GM10248 (cell line): ENCODE measurements at regions of chr5 and their contacts with region 1.

Region 1: GRCh38 chr5:317086-317811 is 4.3 kb upstream of the AHRR start:
- DNase-seq: peak; percentile 92
- CTCF ChIP-seq: peak; percentile 94

Region 2: GRCh38 chr5:285639-286557 is 31.4 kb before region 1 on chr5:
- CTCF ChIA-PET with region 1: interaction called, 17 read pairs
- POLR2A ChIA-PET with region 1: interaction called, 3 read pairs
- DNase-seq: no peak
- CTCF ChIP-seq: no peak

Region 3: GRCh38 chr5:368183-369084 is 51.2 kb after region 1 on chr5:
- CTCF ChIA-PET with region 1: interaction called, 17 read pairs
- POLR2A ChIA-PET with region 1: interaction called, 3 read pairs
- DNase-seq: peak; percentile 75
- CTCF ChIP-seq: no peak

Region 4: DNA sequence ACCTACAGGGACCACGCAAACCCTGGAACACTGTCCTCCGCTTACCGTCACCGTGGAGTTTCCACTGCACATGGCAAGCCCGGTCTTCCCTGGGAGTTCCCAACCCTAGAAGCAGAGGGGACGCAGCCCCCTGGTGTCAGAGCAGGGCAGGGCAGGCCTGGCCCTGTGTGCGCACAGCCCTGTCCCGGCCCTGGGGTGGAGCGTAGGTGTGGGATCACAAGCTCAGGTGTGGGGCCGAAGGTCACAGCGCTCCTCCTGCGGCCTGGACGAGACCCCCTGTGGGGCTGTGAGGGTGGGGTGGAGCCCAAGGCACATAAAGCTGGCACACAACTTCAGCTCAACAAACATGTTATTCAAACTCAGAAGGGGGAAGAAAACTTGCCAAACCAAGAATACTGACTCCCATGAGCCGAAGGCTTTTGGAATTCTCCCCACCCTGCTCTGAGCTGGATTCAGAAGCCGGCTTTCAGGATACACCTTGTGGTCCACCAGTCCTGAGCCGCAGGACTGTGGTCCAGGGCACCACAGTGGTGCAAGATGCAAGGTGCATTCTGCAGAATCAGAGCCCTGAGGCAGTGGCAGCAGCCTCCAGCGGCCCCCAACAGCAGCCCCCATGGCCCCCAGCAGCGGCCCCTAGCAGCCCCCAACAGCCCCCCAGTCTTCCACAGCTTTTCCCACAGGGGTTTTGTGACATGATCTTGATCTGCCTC is 113.9 kb after region 1 on chr5:
- CTCF ChIA-PET with region 1: interaction called, 123 read pairs
- POLR2A ChIA-PET with region 1: no interaction called
- DNase-seq: peak; percentile 81
- CTCF ChIP-seq: peak; percentile 92

Region 5: GRCh38 chr5:717143-717542 is 399.9 kb after region 1 on chr5:
- CTCF ChIA-PET with region 1: no interaction called
- POLR2A ChIA-PET with region 1: no interaction called
- DNase-seq: no peak
- CTCF ChIP-seq: no peak

Region 6: DNA sequence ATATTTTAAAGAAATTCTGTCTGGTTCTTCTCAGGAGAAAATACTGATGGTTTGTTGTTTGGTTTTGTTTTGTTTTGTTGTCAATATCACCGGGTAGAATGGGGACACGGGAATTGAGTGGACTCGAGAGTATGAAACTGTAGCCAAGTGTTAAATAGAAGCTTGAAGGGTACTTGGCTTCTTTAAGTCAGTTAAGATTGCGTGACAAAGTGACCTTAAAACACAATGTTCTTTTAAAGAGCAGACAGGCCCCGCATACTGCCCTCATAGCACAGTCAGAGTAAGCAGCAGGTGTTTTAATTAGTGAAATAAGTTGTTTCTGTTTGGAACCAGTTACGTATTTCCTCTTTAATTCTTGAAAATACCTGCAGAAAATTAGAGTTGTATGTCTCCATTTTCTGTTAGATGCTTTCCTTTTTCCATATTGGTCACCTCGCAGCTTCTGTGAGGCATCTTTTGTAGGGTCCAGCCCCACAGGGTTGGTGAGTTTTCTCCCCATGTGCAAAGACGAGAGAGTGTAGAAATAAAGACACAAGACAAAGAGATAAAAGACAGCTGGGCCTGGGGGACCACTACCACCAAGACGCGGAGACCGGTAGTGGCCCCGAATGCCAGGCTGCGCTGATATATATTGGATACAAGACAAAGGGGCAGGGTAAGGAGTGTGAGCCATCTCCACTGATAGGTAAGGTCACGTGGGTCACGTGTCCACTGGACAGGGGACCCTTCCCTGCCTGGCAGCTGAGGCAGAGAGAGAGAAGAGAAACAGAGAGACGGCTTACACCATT is 585.1 kb after region 1 on chr5:
- CTCF ChIA-PET with region 1: interaction called, 15 read pairs
- POLR2A ChIA-PET with region 1: no interaction called
- DNase-seq: no peak
- CTCF ChIP-seq: no peak